ENCODE measurements at regions of chr13 and their contacts with region 1.

Region 1: DNA sequence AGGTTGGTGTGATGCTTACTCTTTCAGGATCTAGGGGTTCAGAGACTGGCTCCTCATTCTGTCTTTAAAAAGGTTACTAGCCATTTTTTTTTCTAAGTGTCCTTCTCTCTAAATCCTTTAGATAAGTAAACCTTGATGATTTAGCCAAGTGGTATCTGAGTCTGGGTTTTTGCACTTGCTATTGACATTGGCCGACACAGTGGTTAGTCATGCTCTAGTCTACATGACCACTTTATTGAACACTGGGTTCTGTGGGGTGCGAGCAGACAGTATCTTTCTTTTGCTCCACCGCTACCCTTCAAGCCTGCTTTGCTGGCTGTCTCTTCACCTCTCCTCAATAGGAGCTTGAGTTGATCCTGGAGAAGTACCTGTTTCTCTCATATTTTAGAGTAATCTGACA is 6.2 kb upstream of the NUP58 start:
- DNase-seq: no peak
- H3K4me3 ChIP-seq: no peak overlapping the region
- H3K27ac ChIP-seq: no peak overlapping the region
- H3K4me1 ChIP-seq: no peaks in the 10 kb centered on the region
- H3K27me3 ChIP-seq: no peaks in the 10 kb centered on the region
- CTCF ChIP-seq: no peak

Region 2: GRCh38 chr13:25232937-25233515 is 62.2 kb before region 1 on chr13:
- CTCF ChIA-PET with region 1: no interaction called
- dilution Hi-C with region 1: loop called (anchors 5 kb)
- in situ Hi-C with region 1: no loop called
- intact Hi-C with region 1: no loop called
- DNase-seq: peak; percentile 16
- H3K4me3 ChIP-seq: no peak overlapping the region
- H3K27ac ChIP-seq: no peak overlapping the region
- H3K4me1 ChIP-seq: no peaks in the 10 kb centered on the region
- H3K27me3 ChIP-seq: no peaks in the 10 kb centered on the region
- CTCF ChIP-seq: peak; percentile 49 to 56